Dendritic cell treated with granulocyte-macrophage colony-stimulating factor and Interleukin-4, amounts not matched to agents 40 ng/mL and 50 ng/mL, for 4 days (primary cell): ENCODE measurements at regions of chr1 and their contacts with region 1.

Region 1: GRCh38 chr1:169031566-169032201 is 74.8 kb upstream of the ATP1B1 start:
- H3K4me3 Mint-ChIP-seq: no peak overlapping the region
- H3K27ac Mint-ChIP-seq: no peak overlapping the region
- H3K4me1 Mint-ChIP-seq: peaks cover 7% of the 10 kb centered on the region
- H3K27me3 Mint-ChIP-seq: no peaks in the 10 kb centered on the region

Region 2: GRCh38 chr1:168987332-168987731 is 44.4 kb before region 1 on chr1:
- intact Hi-C with region 1: loop called (anchors 10 kb)
- H3K4me3 Mint-ChIP-seq: no peak overlapping the region
- H3K27ac Mint-ChIP-seq: no peak overlapping the region
- H3K4me1 Mint-ChIP-seq: peaks cover 15% of the 10 kb centered on the region
- H3K27me3 Mint-ChIP-seq: peaks cover 7% of the 10 kb centered on the region